HCT116 (cell line): ENCODE measurements at regions of chr6 and their contacts with region 1.

Region 1: GRCh38 chr6:26031595-26032339 is 55.5 kb upstream of the HFE start:
- DNase-seq: peak; percentile 99
- ATAC-seq: peak; percentile 66
- H3K4me3 ChIP-seq: peak overlapping the region; percentile 70 to 74
- H3K27ac ChIP-seq: peak overlapping the region; percentile 98
- H3K4me1 ChIP-seq: peaks cover 51 to 87% of the 10 kb centered on the region in 2 experiments
- H3K27me3 ChIP-seq: no peaks in the 10 kb centered on the region
- CTCF ChIP-seq: no peak
- POLR2A ChIP-seq: peak; percentile 99
- RAD21 ChIP-seq: peak; percentile 5; the same call in 1 of the 2 replicates

Region 2: GRCh38 chr6:26097268-26097875 is 65.6 kb after region 1 on chr6:
- CTCF ChIA-PET with region 1: interaction called, 10 read pairs
- POLR2A ChIA-PET with region 1: interaction called, 54 read pairs
- RAD21 ChIA-PET with region 1: no interaction called
- intact Hi-C with region 1: loop called (anchors 1 kb)
- DNase-seq: peak; percentile 55
- ATAC-seq: peak; percentile 93
- H3K4me3 ChIP-seq: no peak overlapping the region
- H3K27ac ChIP-seq: no peak overlapping the region
- H3K4me1 ChIP-seq: peaks cover 2 to 4% of the 10 kb centered on the region in 2 experiments; a peak in 3 of 4 replicates
- H3K27me3 ChIP-seq: no peaks in the 10 kb centered on the region
- CTCF ChIP-seq: peak; percentile 60 to 86 (median 86)
- POLR2A ChIP-seq: no peak
- RAD21 ChIP-seq: peak; percentile 85

Region 3: DNA sequence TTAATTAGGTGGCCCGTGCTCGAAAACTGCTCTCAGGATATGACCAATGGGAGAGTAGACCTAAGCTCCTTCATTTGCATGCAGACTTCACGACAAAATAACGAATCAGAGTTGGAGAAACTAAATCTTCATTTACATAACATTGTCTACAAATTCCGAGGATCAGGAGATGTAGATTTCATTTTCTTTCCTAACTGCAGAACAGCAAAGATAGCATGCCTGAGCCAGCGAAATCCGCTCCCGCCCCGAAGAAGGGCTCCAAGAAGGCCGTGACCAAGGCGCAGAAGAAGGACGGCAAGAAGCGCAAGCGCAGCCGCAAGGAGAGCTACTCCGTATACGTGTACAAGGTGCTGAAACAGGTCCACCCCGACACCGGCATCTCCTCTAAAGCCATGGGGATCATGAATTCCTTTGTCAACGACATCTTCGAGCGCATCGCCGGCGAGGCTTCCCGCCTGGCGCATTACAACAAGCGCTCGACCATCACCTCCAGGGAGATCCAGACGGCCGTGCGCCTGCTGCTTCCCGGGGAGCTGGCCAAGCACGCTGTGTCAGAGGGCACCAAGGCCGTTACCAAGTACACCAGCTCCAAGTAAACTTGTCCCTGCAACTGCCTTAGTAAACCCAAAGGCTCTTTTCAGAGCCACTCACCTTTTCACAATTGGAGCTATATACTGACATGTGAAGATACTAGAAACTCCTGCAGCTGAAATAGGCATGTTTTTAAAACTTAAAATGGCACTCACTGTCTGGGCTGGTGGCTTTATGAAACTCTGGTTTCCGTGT is 152.0 kb after region 1 on chr6:
- CTCF ChIA-PET with region 1: no interaction called
- POLR2A ChIA-PET with region 1: interaction called, 15 read pairs
- RAD21 ChIA-PET with region 1: no interaction called
- intact Hi-C with region 1: no loop called
- DNase-seq: no peak
- ATAC-seq: no peak
- H3K4me3 ChIP-seq: no peak overlapping the region
- H3K27ac ChIP-seq: no peak overlapping the region
- H3K4me1 ChIP-seq: peaks cover 3 to 14% of the 10 kb centered on the region in 2 experiments; a peak in 3 of 4 replicates
- H3K27me3 ChIP-seq: no peaks in the 10 kb centered on the region
- CTCF ChIP-seq: no peak
- POLR2A ChIP-seq: no peak
- RAD21 ChIP-seq: no peak

Region 4: GRCh38 chr6:27132532-27133280 is 1100.9 kb after region 1 on chr6:
- CTCF ChIA-PET with region 1: no interaction called
- POLR2A ChIA-PET with region 1: interaction called, 7 read pairs
- RAD21 ChIA-PET with region 1: no interaction called
- intact Hi-C with region 1: loop called (anchors 5 kb)
- DNase-seq: peak; percentile 100
- ATAC-seq: peak; percentile 75
- H3K4me3 ChIP-seq: peak overlapping the region; percentile 62 to 71
- H3K27ac ChIP-seq: peak overlapping the region; percentile 99
- H3K4me1 ChIP-seq: peaks cover 21 to 38% of the 10 kb centered on the region in 2 experiments
- H3K27me3 ChIP-seq: no peaks in the 10 kb centered on the region
- CTCF ChIP-seq: no peak
- POLR2A ChIP-seq: peak; percentile 98
- RAD21 ChIP-seq: no peak